GM12878 (cell line): ENCODE measurements at regions of chr4 and their contacts with region 1.

Region 1: GRCh38 chr4:184538023-184538599 is 63.8 kb upstream of the IRF2 start:
- DNase-seq: peak; percentile 83
- ATAC-seq: peak; percentile 87
- H3K4me3 ChIP-seq: peak overlapping the region; percentile 88
- H3K27ac ChIP-seq: peak overlapping the region; percentile 86
- H3K4me1 ChIP-seq: peaks cover 23% of the 10 kb centered on the region
- H3K27me3 ChIP-seq: no peaks in the 10 kb centered on the region
- CTCF ChIP-seq: peak; percentile 61 to 79 (median 69)
- EP300 ChIP-seq: no peak
- POLR2A ChIP-seq: no peak
- RAD21 ChIP-seq: peak; percentile 96

Region 2: GRCh38 chr4:184282251-184282713 is 255.8 kb before region 1 on chr4:
- CTCF ChIA-PET with region 1: interaction called, 36 read pairs
- POLR2A ChIA-PET with region 1: interaction called, 22 read pairs
- RAD21 ChIA-PET with region 1: interaction called, 69 read pairs
- SMC1A ChIA-PET with region 1: interaction called, 65 read pairs
- in situ Hi-C with region 1: loop called (anchors 5 kb)
- intact Hi-C with region 1: loop called (anchors 1 kb)
- DNase-seq: peak; percentile 80
- ATAC-seq: peak; percentile 63
- H3K4me3 ChIP-seq: peak overlapping the region; percentile 25
- H3K27ac ChIP-seq: peak overlapping the region; percentile 99
- H3K4me1 ChIP-seq: peaks cover 69% of the 10 kb centered on the region
- H3K27me3 ChIP-seq: no peaks in the 10 kb centered on the region
- CTCF ChIP-seq: peak; percentile 50 to 70 (median 61)
- EP300 ChIP-seq: peak in 1 of 2 experiments; percentile 58; a peak in 2 of 4 replicates
- POLR2A ChIP-seq: peak; percentile 62
- RAD21 ChIP-seq: peak; percentile 69

Region 3: DNA sequence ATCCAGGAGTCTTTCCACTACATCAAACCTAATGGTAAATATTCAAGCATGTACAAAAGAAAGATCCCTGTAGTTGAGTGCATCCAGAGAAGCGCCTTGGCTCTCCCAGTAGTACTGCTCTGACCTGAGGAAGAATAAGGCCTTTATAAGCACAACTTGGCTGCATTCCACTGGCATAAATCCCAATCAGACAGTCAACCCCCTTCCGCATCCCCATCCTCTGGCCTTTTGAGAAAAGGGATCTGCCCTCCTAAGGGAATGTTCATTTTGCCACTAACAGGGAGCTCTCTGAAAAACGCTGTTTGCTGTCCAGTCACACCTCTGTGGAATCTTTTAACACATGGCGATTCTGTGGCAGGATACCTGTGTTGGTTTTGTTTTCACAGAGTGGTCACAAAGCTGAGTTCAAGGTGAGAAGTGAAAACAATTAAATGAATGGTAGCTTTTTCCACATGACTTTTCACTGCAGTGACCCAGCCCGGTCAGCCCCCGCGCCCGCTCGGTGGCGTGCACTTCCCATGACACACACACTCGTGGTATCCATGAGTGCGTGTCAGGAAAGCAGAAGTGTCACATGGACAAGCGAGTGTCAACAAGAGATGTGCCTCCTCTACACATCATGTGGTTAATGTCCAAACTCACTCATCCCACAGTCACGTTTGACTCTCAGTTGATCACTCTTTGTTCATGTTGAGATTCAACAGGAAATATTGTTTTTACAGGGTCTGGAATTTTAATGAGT is 208.3 kb before region 1 on chr4:
- CTCF ChIA-PET with region 1: no interaction called
- POLR2A ChIA-PET with region 1: interaction called, 7 read pairs
- RAD21 ChIA-PET with region 1: interaction called, 45 read pairs
- SMC1A ChIA-PET with region 1: interaction called, 49 read pairs
- in situ Hi-C with region 1: no loop called
- intact Hi-C with region 1: loop called (anchors 5 kb)
- DNase-seq: peak; percentile 90
- ATAC-seq: peak; percentile 81
- H3K4me3 ChIP-seq: no peak overlapping the region
- H3K27ac ChIP-seq: peak overlapping the region; percentile 90
- H3K4me1 ChIP-seq: peaks cover 44% of the 10 kb centered on the region
- H3K27me3 ChIP-seq: no peaks in the 10 kb centered on the region
- CTCF ChIP-seq: no peak; a peak in 2 of 6 replicates
- EP300 ChIP-seq: peak; percentile 98 to 100
- POLR2A ChIP-seq: peak; percentile 53; the same call in 1 of the 2 replicates
- RAD21 ChIP-seq: peak; percentile 28; the same call in 1 of the 2 replicates

Region 4: GRCh38 chr4:184355111-184355604 is 183.0 kb before region 1 on chr4:
- CTCF ChIA-PET with region 1: interaction called, 54 read pairs
- POLR2A ChIA-PET with region 1: interaction called, 58 read pairs
- RAD21 ChIA-PET with region 1: interaction called, 151 read pairs
- SMC1A ChIA-PET with region 1: interaction called, 138 read pairs
- in situ Hi-C with region 1: loop called (anchors 5 kb)
- intact Hi-C with region 1: loop called (anchors 1 kb)
- DNase-seq: peak; percentile 84
- ATAC-seq: peak; percentile 15
- H3K4me3 ChIP-seq: no peak overlapping the region
- H3K27ac ChIP-seq: peak overlapping the region; percentile 99
- H3K4me1 ChIP-seq: peaks cover 16% of the 10 kb centered on the region
- H3K27me3 ChIP-seq: no peaks in the 10 kb centered on the region
- CTCF ChIP-seq: no peak
- EP300 ChIP-seq: peak; percentile 52 to 63; a peak in 2 of 4 replicates
- POLR2A ChIP-seq: no peak
- RAD21 ChIP-seq: peak; percentile 28

Region 5: GRCh38 chr4:184417802-184418511 is 120.2 kb before region 1 on chr4:
- CTCF ChIA-PET with region 1: interaction called, 3 read pairs
- POLR2A ChIA-PET with region 1: interaction called, 4 read pairs
- RAD21 ChIA-PET with region 1: interaction called, 12 read pairs
- SMC1A ChIA-PET with region 1: interaction called, 21 read pairs
- in situ Hi-C with region 1: loop called (anchors 5 kb)
- intact Hi-C with region 1: loop called (anchors 2 kb)
- DNase-seq: peak; percentile 78
- ATAC-seq: peak; percentile 72
- H3K4me3 ChIP-seq: no peak overlapping the region
- H3K27ac ChIP-seq: peak overlapping the region; percentile 90
- H3K4me1 ChIP-seq: peaks cover 64% of the 10 kb centered on the region
- H3K27me3 ChIP-seq: no peaks in the 10 kb centered on the region
- CTCF ChIP-seq: no peak
- EP300 ChIP-seq: peak in 1 of 2 experiments; percentile 75; a peak in 1 of 4 replicates
- POLR2A ChIP-seq: 0 out of 2 replicates have a peak, but pooled peaks have one; percentile 23
- RAD21 ChIP-seq: no peak

Region 6: DNA sequence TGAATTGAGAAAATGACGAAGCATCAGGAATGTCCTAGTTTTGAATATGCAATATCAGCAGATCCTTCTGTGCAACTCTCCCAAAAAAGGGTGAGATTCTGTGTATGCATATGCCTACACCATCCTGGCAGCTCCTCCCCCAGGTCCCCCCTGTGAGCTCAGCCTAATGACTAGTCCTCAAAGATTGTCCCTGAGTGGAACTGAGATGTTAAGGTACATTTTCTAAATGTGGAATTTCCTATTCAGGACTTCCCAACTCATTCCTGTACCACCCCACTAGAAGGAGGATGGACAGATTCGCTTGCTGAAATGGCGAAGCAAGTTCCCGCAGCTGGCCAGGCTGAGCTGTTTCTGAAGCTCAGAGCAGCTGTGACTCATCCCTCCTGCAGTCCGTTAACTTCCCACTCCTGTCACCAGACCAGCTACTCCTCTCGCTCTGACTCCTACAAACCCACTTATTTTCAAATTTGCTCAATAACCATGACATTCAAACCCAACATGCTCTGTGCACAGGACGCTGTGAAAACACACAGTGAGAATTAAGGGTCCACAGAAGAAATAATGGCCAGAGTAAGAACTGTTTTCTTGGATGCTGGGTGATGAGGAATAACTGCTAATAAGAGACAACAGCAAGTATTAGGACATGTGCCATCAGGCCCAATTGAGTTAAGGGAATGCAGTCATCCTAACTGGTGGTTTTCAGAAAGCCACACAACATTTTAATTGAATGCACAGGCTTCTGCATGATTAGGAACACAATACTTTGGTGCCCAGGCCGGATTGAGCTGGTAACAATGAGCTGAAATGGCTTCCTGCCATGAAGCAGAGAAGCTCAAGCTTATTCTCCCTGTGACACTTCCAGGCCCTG is 23.8 kb before region 1 on chr4:
- CTCF ChIA-PET with region 1: interaction called, 10 read pairs
- POLR2A ChIA-PET with region 1: interaction called, 36 read pairs
- RAD21 ChIA-PET with region 1: interaction called, 88 read pairs
- SMC1A ChIA-PET with region 1: interaction called, 117 read pairs
- in situ Hi-C with region 1: no loop called
- intact Hi-C with region 1: loop called (anchors 1 kb)
- DNase-seq: peak; percentile 94
- ATAC-seq: peak; percentile 96
- H3K4me3 ChIP-seq: peak overlapping the region; percentile 42
- H3K27ac ChIP-seq: peak overlapping the region; percentile 70
- H3K4me1 ChIP-seq: peaks cover 32% of the 10 kb centered on the region
- H3K27me3 ChIP-seq: no peaks in the 10 kb centered on the region
- CTCF ChIP-seq: no peak
- EP300 ChIP-seq: peak; percentile 99 to 100
- POLR2A ChIP-seq: 0 out of 2 replicates have a peak, but pooled peaks have one; percentile 30
- RAD21 ChIP-seq: no peak

Region 7: GRCh38 chr4:184695178-184695896 is 157.2 kb after region 1 on chr4:
- CTCF ChIA-PET with region 1: no interaction called
- POLR2A ChIA-PET with region 1: no interaction called
- RAD21 ChIA-PET with region 1: no interaction called
- SMC1A ChIA-PET with region 1: no interaction called
- in situ Hi-C with region 1: no loop called
- intact Hi-C with region 1: no loop called
- DNase-seq: no peak
- ATAC-seq: no peak
- H3K4me3 ChIP-seq: no peak overlapping the region
- H3K27ac ChIP-seq: no peak overlapping the region
- H3K4me1 ChIP-seq: no peaks in the 10 kb centered on the region
- H3K27me3 ChIP-seq: no peaks in the 10 kb centered on the region
- CTCF ChIP-seq: no peak
- EP300 ChIP-seq: no peak
- POLR2A ChIP-seq: no peak
- RAD21 ChIP-seq: no peak